ENCODE measurements at regions of chr20 and their contacts with region 1.

Region 1: GRCh38 chr20:324177-325044 is 941 bp upstream of the SOX12 start:
- DNase-seq: peak; percentile 78
- H3K4me3 Mint-ChIP-seq: peak overlapping the region; percentile 83
- H3K27ac Mint-ChIP-seq: peak overlapping the region; percentile 63
- H3K4me1 Mint-ChIP-seq: peaks cover 12% of the 10 kb centered on the region
- H3K27me3 Mint-ChIP-seq: no peaks in the 10 kb centered on the region

Region 2: GRCh38 chr20:290084-290831 is 34.2 kb before region 1 on chr20 and contains the start of gene C20orf96:
- CTCF ChIA-PET with region 1: interaction called, 10 read pairs
- intact Hi-C with region 1: loop called (anchors 1 kb)
- DNase-seq: peak; percentile 92
- H3K4me3 Mint-ChIP-seq: no peak within 1 kb of the TSS
- H3K27ac Mint-ChIP-seq: peak within 1 kb of the TSS; percentile 74
- H3K4me1 Mint-ChIP-seq: peaks cover 7% of the 10 kb centered on the region
- H3K27me3 Mint-ChIP-seq: no peaks in the 10 kb centered on the region
- total RNA-seq, gene C20orf96: 5.1 to 6.8 TPM

Region 3: DNA sequence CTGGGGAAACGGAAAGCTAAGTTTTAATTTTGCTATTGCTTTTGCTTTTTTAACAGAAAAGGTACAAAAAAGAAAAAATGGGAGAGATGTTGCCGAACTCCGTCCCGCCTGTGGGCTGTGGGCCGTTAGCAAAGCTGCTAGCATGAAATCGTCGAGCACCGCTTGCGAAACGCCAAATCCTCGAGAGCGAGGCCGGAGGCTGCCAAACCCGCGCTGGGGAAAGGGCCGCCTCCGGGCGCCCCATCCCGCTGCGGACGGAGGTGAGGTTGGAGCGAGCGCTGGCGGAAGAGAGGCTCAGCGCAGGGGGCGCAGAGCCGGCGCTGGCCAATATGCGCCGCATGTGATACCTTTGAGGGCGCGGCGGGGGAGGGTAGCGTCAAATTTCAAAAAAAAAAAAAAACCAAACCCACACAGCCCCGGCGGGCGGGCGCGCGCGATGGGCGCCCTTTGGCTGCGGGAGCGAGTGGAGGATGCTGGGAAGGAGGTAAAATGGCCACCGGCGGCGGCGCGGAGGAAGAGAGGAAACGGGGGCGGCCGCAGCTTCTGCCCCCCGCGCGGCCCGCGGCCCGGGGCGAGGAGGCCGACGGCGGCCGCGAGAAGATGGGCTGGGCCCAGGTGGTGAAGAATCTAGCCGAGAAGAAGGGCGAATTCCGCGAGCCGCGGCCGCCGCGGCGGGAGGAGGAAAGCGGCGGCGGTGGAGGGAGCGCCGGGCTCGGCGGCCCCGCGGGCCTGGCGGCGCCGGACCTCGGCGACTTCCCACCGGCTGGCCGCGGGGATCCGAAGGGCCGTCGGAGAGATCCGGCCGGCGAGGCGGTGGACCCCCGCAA is 27.1 kb before region 1 on chr20 and contains the start of gene ZCCHC3:
- CTCF ChIA-PET with region 1: interaction called, 10 read pairs
- intact Hi-C with region 1: loop called (anchors 1 kb)
- DNase-seq: peak; percentile 87
- H3K4me3 Mint-ChIP-seq: peak within 1 kb of the TSS; percentile 100
- H3K27ac Mint-ChIP-seq: peak within 1 kb of the TSS; percentile 100
- H3K4me1 Mint-ChIP-seq: peaks cover 30% of the 10 kb centered on the region
- H3K27me3 Mint-ChIP-seq: no peaks in the 10 kb centered on the region
- total RNA-seq, gene ZCCHC3: 13.6 to 15.6 TPM

Region 4: DNA sequence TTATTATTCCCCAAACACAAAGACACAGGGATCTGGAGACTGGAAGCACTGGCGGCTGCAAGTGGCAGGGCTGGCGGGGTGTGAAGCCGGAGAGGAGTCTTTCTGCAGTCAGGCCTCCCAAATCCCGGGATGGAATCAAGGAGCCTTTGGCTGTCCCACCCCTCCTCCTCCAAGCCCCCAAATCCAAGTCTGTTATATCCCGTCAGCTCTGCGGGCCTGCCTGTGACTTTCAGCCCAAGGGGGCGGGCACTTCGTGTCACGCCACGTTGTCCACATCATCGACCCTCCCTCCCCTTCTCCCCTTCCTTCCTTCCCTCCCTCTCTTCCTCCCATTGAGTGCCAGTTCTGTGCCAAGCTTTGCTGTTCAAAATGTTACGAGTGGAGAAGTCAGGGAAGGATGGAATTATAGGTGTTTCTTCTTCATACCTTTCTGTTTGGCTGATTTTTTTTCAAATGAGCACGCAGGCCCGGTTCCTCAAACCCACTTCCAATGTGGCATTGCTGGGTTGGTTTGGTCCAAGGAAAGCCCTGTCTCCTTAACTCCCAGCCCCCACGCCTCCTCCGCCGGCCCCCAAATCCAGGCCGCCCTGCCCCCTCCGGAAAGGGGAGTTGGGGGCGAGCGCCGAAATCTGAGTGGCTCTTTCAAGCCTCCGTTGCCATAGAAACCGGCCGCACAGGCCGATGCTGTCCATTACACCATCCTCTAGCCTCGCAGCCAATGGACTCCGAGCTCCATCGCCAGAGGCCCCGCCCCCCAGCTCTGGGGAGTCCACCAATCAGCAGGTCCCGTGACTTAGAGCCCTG is 14.4 kb before region 1 on chr20:
- CTCF ChIA-PET with region 1: interaction called, 4 read pairs
- intact Hi-C with region 1: loop called (anchors 1 kb)
- DNase-seq: peak; percentile 93
- H3K4me3 Mint-ChIP-seq: peak overlapping the region; percentile 74
- H3K27ac Mint-ChIP-seq: peak overlapping the region; percentile 43
- H3K4me1 Mint-ChIP-seq: peaks cover 11% of the 10 kb centered on the region
- H3K27me3 Mint-ChIP-seq: no peaks in the 10 kb centered on the region

Region 5: GRCh38 chr20:856361-857040 is 532.1 kb after region 1 on chr20:
- CTCF ChIA-PET with region 1: no interaction called
- intact Hi-C with region 1: no loop called
- DNase-seq: peak; percentile 64
- H3K4me3 Mint-ChIP-seq: no peak overlapping the region
- H3K27ac Mint-ChIP-seq: no peak overlapping the region
- H3K4me1 Mint-ChIP-seq: peaks cover 58% of the 10 kb centered on the region
- H3K27me3 Mint-ChIP-seq: no peaks in the 10 kb centered on the region

Measured in activated naive CD4-positive, alpha-beta T cell treated with anti-CD3 and anti-CD28 coated beads for 36 hours (primary cell).